Aorta (tissue), 5 donors: ENCODE measurements at regions of chr6 and their contacts with region 1.

Region 1: DNA sequence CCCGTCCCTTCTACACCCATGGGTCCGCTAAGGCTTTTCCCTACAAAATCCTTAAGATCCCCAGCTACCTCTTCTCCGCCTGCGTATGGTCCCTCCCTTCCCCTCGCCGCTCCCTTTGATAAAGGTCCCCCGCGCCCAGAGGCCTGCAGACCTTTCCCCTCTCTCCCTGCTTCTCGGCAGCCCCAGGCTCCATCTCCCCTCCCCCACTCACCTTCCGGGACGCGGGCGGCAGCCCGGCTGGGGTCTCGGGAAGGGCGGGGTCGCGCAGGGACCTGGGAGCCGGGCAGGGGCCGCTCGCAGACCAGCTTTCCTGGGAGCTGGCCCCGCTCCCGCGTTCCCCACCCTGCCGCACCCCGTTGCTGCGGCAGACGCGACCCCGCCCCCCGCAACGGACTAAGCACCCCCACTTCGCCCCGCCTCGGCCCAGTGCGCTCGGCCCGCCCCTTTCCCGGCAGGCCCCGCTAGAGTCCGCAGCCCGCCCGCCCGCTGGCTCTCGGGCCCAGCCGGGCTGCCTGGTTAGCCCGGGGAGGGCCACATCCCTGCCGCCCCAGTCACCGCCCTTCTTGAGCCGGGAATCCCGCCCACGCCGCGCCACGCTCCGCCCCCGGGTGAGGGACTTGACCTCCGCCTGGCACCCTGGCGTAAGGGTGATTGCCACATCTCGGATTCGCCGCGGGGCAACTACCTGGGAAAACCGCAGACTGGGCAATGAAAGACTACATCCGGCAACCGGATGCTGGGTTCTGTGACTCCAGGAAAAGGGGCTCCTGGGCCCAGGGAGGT is at the start of gene FLOT1:
- DNase-seq: peak; percentile 99 to 100
- ATAC-seq: peak; percentile 95
- H3K4me3 ChIP-seq: peak within 1 kb of the TSS; percentile 55 to 84
- H3K27ac ChIP-seq: peak within 1 kb of the TSS; percentile 71 to 94
- H3K4me1 ChIP-seq: no peaks in the 10 kb centered on the region
- H3K27me3 ChIP-seq: peaks cover 0 to 7% of the 10 kb centered on the region in 2 donors
- total RNA-seq, gene FLOT1: 172 to 222 TPM

Region 2: DNA sequence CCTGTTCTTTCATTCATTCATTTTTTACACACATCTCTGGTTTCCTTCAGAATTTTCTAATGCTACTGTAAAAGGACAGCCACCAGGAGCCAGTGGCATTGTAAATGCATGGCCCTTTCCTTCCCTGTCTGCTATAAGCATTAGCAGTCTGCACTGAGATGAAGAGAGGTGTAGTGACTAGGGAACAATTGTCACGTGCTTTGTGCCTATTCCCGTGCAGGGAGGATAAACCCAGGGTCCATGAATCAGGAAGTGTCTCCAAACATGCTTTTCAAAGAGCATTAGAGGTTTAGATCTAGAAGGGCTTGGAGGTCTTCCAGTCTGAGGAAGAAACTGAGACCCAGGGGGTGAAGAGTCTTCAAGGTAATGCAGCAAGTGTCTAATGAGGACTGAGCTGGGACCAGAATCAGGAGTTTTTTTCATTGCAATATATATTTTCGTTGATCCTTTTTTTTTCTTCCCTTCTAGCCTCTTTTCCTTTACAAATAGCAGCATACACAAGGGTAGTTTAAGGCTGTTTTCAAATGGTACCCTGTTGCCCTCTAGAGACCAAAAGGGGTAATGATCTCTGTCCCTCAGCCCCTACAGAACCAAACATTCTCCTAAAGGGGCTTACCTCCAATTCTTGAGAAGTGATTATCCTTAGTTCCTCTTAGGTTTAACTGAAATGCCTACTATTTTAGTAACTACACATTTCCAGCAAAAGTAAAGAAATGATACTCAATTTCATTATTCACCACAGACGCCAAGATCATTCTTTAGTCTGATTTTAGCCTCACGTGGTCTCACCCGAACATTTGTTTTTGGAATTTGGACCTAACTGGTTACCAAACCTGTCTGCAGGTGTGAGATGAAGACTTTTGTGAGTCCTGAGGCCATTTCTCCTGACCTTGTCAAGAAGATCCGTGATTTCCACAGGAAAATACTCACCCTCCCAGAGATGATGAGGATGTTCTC is 572.6 kb before region 1 on chr6:
- intact Hi-C with region 1: no loop called
- DNase-seq: no peak
- ATAC-seq: peak; percentile 74
- H3K4me3 ChIP-seq: no peak overlapping the region
- H3K27ac ChIP-seq: no peak overlapping the region
- H3K4me1 ChIP-seq: no peaks in the 10 kb centered on the region
- H3K27me3 ChIP-seq: peaks cover 0 to 1% of the 10 kb centered on the region in 2 donors

Region 3: DNA sequence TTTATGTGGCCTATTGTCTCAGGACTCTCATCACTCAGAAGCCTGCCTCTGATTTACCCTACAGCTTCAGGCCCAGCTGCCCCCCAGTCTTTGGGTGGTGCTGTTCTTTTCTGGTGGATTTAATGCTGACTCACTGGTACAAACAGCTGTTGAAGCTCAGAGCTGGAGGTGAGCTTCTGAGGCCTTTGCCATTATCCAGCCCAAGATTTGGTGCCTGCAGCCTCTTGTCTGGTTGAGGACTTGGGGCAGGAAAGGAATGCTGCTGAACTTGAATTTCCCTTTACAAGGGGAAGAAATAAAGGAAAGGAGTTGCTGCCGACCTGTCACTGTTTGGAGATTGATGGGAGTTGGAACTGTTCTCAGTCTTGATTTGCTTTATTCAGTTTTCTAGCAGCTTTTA is 151.5 kb before region 1 on chr6:
- intact Hi-C with region 1: no loop called
- DNase-seq: no peak
- ATAC-seq: no peak
- H3K4me3 ChIP-seq: no peak overlapping the region
- H3K27ac ChIP-seq: no peak overlapping the region
- H3K4me1 ChIP-seq: no peaks in the 10 kb centered on the region
- H3K27me3 ChIP-seq: no peaks in the 10 kb centered on the region

Region 4: DNA sequence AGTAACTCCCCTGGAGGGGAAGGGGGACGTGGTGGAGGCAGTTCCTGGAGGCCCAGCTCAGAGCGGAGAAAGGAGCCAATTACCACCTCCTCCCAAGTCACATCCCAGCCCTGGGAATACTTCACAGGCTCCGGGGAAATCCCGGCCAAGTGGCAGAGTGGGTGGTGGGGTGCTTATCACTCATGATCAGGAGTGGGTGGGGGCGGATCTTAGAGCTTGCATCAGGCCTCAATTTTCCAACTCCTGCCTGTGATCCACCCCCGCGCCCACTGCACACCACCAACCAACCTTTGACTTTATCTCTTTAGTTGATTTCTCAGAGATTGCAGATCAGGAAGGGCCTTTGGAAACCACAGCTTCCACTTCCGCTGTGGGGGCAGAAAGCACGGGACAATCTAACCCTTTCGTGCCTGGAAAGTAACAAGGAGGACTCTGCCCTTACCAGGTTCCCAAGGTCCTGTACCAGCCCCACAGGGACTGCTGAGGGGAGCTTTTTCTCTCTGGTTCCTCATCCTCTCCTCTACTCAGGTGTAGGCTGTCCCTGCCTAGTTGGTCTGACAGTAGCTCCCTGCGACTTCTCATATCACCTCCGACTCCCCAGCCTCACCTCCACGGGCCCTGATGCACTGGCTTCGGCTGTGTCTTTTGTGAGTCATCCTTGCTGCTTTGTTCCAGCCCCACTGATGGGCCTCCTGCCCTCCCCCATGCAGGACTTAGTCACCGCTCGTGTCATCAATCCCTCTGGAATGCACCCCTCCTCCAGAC is 26.8 kb after region 1 on chr6:
- intact Hi-C with region 1: no loop called
- DNase-seq: peak; percentile 84 to 91
- ATAC-seq: peak; percentile 81
- H3K4me3 ChIP-seq: no peak overlapping the region
- H3K27ac ChIP-seq: peak overlapping the region in 1 of 2 donors; percentile 66
- H3K4me1 ChIP-seq: peaks cover 0 to 4% of the 10 kb centered on the region in 2 donors
- H3K27me3 ChIP-seq: no peaks in the 10 kb centered on the region

Region 5: GRCh38 chr6:30781743-30782424 is 39.4 kb after region 1 on chr6:
- intact Hi-C with region 1: loop called (anchors 5 kb)
- DNase-seq: peak; percentile 98 to 99
- ATAC-seq: peak; percentile 93
- H3K4me3 ChIP-seq: no peak overlapping the region
- H3K27ac ChIP-seq: peak overlapping the region; percentile 71 to 96
- H3K4me1 ChIP-seq: no peaks in the 10 kb centered on the region
- H3K27me3 ChIP-seq: no peaks in the 10 kb centered on the region

Region 6: DNA sequence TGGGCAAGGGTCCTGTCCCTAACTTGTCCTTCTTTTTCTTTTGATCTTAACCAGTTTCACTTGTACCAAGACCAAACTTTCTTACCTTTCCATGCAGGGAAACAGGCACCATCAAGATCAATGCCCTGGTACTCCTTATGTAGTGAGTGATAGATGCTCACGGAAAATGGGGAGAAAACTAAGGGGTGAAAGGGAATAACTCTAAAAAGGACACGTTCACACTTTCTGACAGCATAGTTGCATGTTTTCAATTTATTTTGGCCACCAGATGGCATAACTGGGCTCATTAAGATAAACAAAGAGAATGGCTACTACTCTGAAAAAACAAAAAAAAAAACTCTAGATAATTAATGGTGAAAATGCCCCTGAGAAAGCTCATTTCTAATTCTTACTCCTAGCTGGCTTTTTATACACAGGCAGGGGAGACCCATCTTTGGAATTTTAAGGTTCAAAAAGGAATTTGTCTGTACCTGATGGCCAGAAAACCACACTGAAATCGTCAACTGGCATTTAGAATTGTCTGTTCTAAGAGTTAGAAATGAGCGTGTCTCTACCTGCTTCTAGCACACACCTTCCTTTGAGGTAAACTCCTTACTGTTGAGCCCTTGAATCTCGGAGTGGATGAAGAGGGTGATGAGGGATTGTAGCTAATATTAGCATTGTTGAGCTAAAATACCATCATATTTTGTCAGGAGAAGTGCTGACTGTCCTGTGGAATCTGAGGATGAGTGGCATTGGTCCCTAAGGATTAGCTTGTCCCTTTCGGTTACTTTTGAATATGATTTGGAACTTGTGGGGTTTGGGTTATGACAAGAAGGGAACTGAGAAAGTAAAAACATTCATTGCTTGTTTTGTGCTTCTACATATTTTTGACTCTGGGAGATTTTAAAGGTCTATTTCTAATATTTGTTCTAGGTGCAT is 79.6 kb after region 1 on chr6:
- intact Hi-C with region 1: loop called (anchors 5 kb)
- DNase-seq: no peak
- ATAC-seq: no peak
- H3K4me3 ChIP-seq: no peak overlapping the region
- H3K27ac ChIP-seq: peak overlapping the region in 1 of 2 donors; percentile 37
- H3K4me1 ChIP-seq: peaks cover 0 to 10% of the 10 kb centered on the region in 2 donors
- H3K27me3 ChIP-seq: no peaks in the 10 kb centered on the region

Region 7: GRCh38 chr6:30828027-30828960 is 85.8 kb after region 1 on chr6:
- intact Hi-C with region 1: loop called (anchors 5 kb)
- DNase-seq: peak; percentile 94
- ATAC-seq: peak; percentile 96
- H3K4me3 ChIP-seq: no peak overlapping the region
- H3K27ac ChIP-seq: no peak overlapping the region
- H3K4me1 ChIP-seq: no peaks in the 10 kb centered on the region
- H3K27me3 ChIP-seq: no peaks in the 10 kb centered on the region

Region 8: DNA sequence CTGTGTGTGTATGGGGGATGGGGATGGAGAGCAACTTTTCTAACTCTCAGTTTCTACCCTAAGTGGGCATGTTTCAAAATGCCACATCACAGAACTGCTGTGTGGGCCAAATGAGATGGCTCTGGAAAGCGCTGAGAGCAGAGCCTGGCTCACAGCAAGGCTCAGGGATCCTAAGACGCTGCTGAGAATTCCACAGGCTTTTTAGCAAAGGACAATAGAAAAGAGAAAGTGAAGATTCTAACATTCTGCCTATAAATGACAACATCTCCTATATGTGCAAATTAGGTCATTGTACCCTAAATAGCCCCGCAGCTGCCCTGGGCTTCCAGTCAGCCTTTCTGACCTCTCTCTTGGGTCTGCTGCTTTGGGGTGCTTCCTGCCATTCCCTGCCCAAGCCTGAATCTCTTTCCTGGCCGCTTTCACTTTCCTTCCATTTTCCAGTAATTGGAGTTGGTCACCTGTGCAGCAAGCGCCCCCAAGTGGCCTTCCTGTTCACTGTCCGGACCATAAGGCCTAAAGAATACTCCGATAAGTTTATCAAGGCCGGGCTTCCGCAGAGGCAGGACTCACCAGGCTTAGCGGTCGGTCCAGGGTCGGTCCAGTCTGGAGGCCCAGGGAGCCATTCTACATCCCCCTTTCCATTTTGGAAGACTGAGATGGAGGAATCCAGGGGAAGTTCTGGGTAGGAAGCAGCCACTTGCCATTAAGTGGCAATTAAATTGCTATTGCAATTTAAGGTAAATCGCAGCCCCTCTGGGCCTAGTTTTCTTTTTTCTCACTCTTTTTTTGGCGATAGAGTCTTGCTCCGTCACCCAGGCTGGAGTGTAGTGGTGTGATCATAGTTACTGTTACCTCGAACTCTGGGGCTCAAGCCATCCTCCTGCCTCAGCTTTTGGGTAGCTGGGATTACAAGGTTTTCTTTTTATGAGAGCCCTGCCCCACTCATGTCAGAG is 135.2 kb after region 1 on chr6:
- intact Hi-C with region 1: loop called (anchors 5 kb)
- DNase-seq: peak; percentile 93 to 95
- ATAC-seq: peak; percentile 92
- H3K4me3 ChIP-seq: peak overlapping the region in 1 of 2 donors; percentile 31
- H3K27ac ChIP-seq: peak overlapping the region; percentile 39 to 88
- H3K4me1 ChIP-seq: no peaks in the 10 kb centered on the region
- H3K27me3 ChIP-seq: no peaks in the 10 kb centered on the region

Region 9: DNA sequence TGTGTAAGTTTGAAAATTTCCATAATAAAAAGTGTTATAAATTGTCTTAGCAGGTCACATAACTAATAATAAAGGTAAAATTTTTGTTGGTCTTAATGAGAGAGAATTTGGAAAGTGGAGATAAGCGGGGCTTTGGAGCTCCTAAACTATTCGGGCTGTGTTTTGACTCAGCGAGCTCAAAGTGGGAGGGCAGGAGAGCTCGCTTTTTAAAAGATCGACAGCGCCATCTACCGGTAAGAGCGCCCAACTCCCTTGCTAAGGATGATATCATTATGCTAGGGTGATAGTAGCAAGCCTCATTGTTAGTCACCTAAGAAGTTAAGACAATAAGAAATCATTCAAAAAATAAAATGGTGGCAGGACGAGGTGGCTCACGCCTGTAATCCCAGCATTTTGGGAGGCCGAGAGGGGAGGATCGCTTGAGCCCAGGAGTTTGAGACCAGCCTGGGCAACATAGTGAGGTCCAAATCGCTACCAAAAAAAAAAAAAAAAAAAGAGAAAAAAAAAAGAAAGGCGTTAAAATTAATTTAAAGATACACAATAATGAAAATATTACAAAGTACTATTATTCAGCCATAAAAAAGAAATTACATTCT is 345.1 kb after region 1 on chr6:
- intact Hi-C with region 1: loop called in 1 of 2 experiments (anchors 10 kb)
- DNase-seq: peak; percentile 91 to 95
- ATAC-seq: peak; percentile 92
- H3K4me3 ChIP-seq: no peak overlapping the region
- H3K27ac ChIP-seq: no peak overlapping the region
- H3K4me1 ChIP-seq: no peaks in the 10 kb centered on the region
- H3K27me3 ChIP-seq: no peaks in the 10 kb centered on the region